ENCODE measurements at regions of chr11 and their contacts with region 1.

Region 1: GRCh38 chr11:57324886-57325734 is at the start of gene TNKS1BP1:
- DNase-seq: peak; percentile 95
- H3K4me3 Mint-ChIP-seq: peak within 1 kb of the TSS; percentile 79
- H3K27ac Mint-ChIP-seq: peak within 1 kb of the TSS; percentile 95
- H3K4me1 Mint-ChIP-seq: peaks cover 42% of the 10 kb centered on the region
- H3K27me3 Mint-ChIP-seq: no peaks in the 10 kb centered on the region
- total RNA-seq, gene TNKS1BP1: 14.0 to 15.1 TPM

Region 2: GRCh38 chr11:57311109-57311936 is 13.8 kb before region 1 on chr11:
- CTCF ChIA-PET with region 1: no interaction called
- POLR2A ChIA-PET with region 1: interaction called, 4 read pairs
- intact Hi-C with region 1: loop called (anchors 1 kb)
- DNase-seq: peak; percentile 86
- H3K4me3 Mint-ChIP-seq: peak overlapping the region; percentile 10
- H3K27ac Mint-ChIP-seq: no peak overlapping the region
- H3K4me1 Mint-ChIP-seq: peaks cover 11% of the 10 kb centered on the region
- H3K27me3 Mint-ChIP-seq: no peaks in the 10 kb centered on the region

Region 3: GRCh38 chr11:57335343-57336110 is 10.4 kb after region 1 on chr11 and contains the start of gene SSRP1:
- CTCF ChIA-PET with region 1: interaction called, 28 read pairs
- POLR2A ChIA-PET with region 1: interaction called, 30 read pairs
- intact Hi-C with region 1: loop called (anchors 1 kb)
- DNase-seq: peak; percentile 92
- H3K4me3 Mint-ChIP-seq: peak within 1 kb of the TSS; percentile 91
- H3K27ac Mint-ChIP-seq: peak within 1 kb of the TSS; percentile 98
- H3K4me1 Mint-ChIP-seq: peaks cover 47% of the 10 kb centered on the region
- H3K27me3 Mint-ChIP-seq: no peaks in the 10 kb centered on the region
- total RNA-seq, gene SSRP1: 256 to 262 TPM

Measured in activated CD4-positive, alpha-beta memory T cell treated with anti-CD3 and anti-CD28 coated beads for 36 hours (primary cell).